Calu3 (cell line): ENCODE measurements at regions of chr17 and their contacts with region 1.

Region 1: DNA sequence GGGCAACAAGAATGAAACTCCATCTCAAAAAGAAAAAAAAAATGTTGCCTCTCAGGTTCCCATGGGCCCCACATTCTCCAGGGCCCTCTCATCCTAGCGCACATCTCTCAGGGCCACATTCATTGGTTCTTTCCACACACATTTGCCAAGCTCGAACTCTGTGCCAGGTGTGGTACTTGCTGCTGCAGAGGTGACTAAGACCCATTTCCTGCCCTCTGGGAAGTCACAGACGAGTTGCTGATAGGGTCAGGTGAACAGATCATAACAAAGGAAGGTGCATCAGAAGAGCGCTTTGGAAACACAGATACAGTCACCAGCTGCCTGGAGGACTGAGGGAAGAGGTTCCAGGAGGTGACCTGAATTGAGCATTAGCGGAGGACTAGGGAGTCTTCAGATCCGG is 1.0 kb downstream of the GSDMA start:
- DNase-seq: peak; percentile 94
- H3K4me3 Mint-ChIP-seq: no peak overlapping the region
- H3K27ac Mint-ChIP-seq: peak overlapping the region; percentile 0
- H3K4me1 Mint-ChIP-seq: peaks cover 45% of the 10 kb centered on the region
- H3K27me3 Mint-ChIP-seq: peaks cover 32% of the 10 kb centered on the region
- CTCF ChIP-seq: no peak

Region 2: GRCh38 chr17:39473310-39473709 is 490.5 kb before region 1 on chr17:
- CTCF ChIA-PET with region 1: no interaction called
- intact Hi-C with region 1: no loop called
- DNase-seq: no peak
- H3K4me3 Mint-ChIP-seq: no peak overlapping the region
- H3K27ac Mint-ChIP-seq: no peak overlapping the region
- H3K4me1 Mint-ChIP-seq: no peaks in the 10 kb centered on the region
- H3K27me3 Mint-ChIP-seq: no peaks in the 10 kb centered on the region
- CTCF ChIP-seq: no peak

Region 3: GRCh38 chr17:39704821-39705551 is 258.8 kb before region 1 on chr17:
- CTCF ChIA-PET with region 1: interaction called, 8,195 read pairs
- intact Hi-C with region 1: loop called (anchors 1 kb)
- DNase-seq: peak; percentile 99
- H3K4me3 Mint-ChIP-seq: peak overlapping the region; percentile 71
- H3K27ac Mint-ChIP-seq: peak overlapping the region; percentile 67
- H3K4me1 Mint-ChIP-seq: peaks cover 92% of the 10 kb centered on the region
- H3K27me3 Mint-ChIP-seq: no peaks in the 10 kb centered on the region
- CTCF ChIP-seq: no peak

Region 4: DNA sequence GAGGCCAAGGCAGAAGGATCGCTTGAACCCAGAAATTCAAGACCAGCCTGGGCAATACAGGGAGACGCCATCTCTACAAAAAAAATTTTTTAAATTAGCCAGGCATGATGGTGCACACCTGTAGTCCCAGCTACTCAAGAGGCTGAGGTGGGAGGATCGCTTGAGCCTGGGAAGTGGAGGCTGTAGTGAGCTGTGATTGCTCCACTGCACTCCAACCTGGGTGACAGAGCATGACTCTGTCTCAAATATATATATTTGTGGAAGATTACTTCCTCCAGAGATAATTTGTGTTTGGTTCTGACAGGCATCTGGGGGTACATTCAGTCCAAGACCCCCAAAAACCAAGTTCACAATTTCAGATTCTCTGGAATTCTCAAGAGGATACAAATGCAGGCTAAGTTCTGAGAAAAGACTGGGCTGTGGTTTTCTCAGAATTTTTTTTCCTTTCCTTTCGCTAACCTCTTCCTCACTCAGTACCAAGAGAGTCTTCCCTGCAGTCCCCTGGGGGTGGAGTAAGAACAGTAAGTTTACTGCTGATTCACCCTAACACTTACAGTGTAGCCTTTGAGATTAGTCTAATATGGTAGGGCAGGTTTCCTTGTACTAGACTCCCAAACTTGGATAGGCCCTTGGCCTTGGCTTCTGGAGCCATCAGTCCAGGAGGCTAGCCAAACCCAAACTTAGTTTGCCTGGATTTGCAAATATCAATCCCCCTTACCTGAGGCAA is 60.5 kb before region 1 on chr17:
- CTCF ChIA-PET with region 1: interaction called, 6,506 read pairs
- intact Hi-C with region 1: loop called (anchors 1 kb)
- DNase-seq: peak; percentile 66
- H3K4me3 Mint-ChIP-seq: no peak overlapping the region
- H3K27ac Mint-ChIP-seq: no peak overlapping the region
- H3K4me1 Mint-ChIP-seq: peaks cover 12% of the 10 kb centered on the region
- H3K27me3 Mint-ChIP-seq: no peaks in the 10 kb centered on the region
- CTCF ChIP-seq: no peak

Region 5: GRCh38 chr17:39939588-39940419 is 24.0 kb before region 1 on chr17:
- CTCF ChIA-PET with region 1: interaction called, 6,506 read pairs
- intact Hi-C with region 1: loop called (anchors 1 kb)
- DNase-seq: peak; percentile 76
- H3K4me3 Mint-ChIP-seq: no peak overlapping the region
- H3K27ac Mint-ChIP-seq: no peak overlapping the region
- H3K4me1 Mint-ChIP-seq: peaks cover 12% of the 10 kb centered on the region
- H3K27me3 Mint-ChIP-seq: peaks cover 63% of the 10 kb centered on the region
- CTCF ChIP-seq: no peak

Region 6: GRCh38 chr17:40457964-40458791 is 494.3 kb after region 1 on chr17:
- CTCF ChIA-PET with region 1: interaction called, 10 read pairs
- intact Hi-C with region 1: no loop called
- DNase-seq: peak; percentile 99
- H3K4me3 Mint-ChIP-seq: peak overlapping the region; percentile 13
- H3K27ac Mint-ChIP-seq: no peak overlapping the region
- H3K4me1 Mint-ChIP-seq: peaks cover 33% of the 10 kb centered on the region
- H3K27me3 Mint-ChIP-seq: peaks cover 29% of the 10 kb centered on the region
- CTCF ChIP-seq: no peak